Mammary epithelial cell (primary cell): ENCODE measurements at regions of chr15 and their contacts with region 1.

Region 1: GRCh38 chr15:44215594-44215993 is 20.5 kb upstream of the FRMD5 start:
- DNase-seq: peak; percentile 94
- H3K4me3 ChIP-seq: no peak overlapping the region
- H3K27ac ChIP-seq: no peak overlapping the region
- H3K4me1 ChIP-seq: peaks cover 17% of the 10 kb centered on the region
- H3K27me3 ChIP-seq: no peaks in the 10 kb centered on the region
- CTCF ChIP-seq: no peak

Region 2: GRCh38 chr15:43872416-43873020 is 343.1 kb before region 1 on chr15:
- CTCF ChIA-PET with region 1: no interaction called
- dilution Hi-C with region 1: no loop called
- in situ Hi-C with region 1: no loop called
- intact Hi-C with region 1: loop called (anchors 2 kb)
- DNase-seq: peak; percentile 27
- H3K4me3 ChIP-seq: no peak overlapping the region
- H3K27ac ChIP-seq: no peak overlapping the region
- H3K4me1 ChIP-seq: no peaks in the 10 kb centered on the region
- H3K27me3 ChIP-seq: no peaks in the 10 kb centered on the region
- CTCF ChIP-seq: peak; percentile 59 to 65

Region 3: GRCh38 chr15:43939070-43939469 is 276.5 kb before region 1 on chr15:
- CTCF ChIA-PET with region 1: no interaction called
- dilution Hi-C with region 1: no loop called
- in situ Hi-C with region 1: no loop called
- intact Hi-C with region 1: loop called (anchors 1 kb)
- DNase-seq: no peak
- H3K4me3 ChIP-seq: no peak overlapping the region
- H3K27ac ChIP-seq: no peak overlapping the region
- H3K4me1 ChIP-seq: peaks cover 5% of the 10 kb centered on the region
- H3K27me3 ChIP-seq: no peaks in the 10 kb centered on the region
- CTCF ChIP-seq: peak; percentile 52 to 71

Region 4: GRCh38 chr15:44075535-44075934 is 140.1 kb before region 1 on chr15:
- CTCF ChIA-PET with region 1: no interaction called
- dilution Hi-C with region 1: no loop called
- in situ Hi-C with region 1: no loop called
- intact Hi-C with region 1: loop called (anchors 2 kb)
- DNase-seq: peak; percentile 94
- H3K4me3 ChIP-seq: peak overlapping the region in 1 of 3 experiments; percentile 17
- H3K27ac ChIP-seq: peak overlapping the region; percentile 99
- H3K4me1 ChIP-seq: peaks cover 20% of the 10 kb centered on the region
- H3K27me3 ChIP-seq: no peaks in the 10 kb centered on the region
- CTCF ChIP-seq: no peak

Region 5: GRCh38 chr15:44137750-44138149 is 77.8 kb before region 1 on chr15:
- CTCF ChIA-PET with region 1: no interaction called
- dilution Hi-C with region 1: loop called (anchors 5 kb)
- in situ Hi-C with region 1: no loop called
- intact Hi-C with region 1: no loop called
- DNase-seq: peak; percentile 19
- H3K4me3 ChIP-seq: no peak overlapping the region
- H3K27ac ChIP-seq: no peak overlapping the region
- H3K4me1 ChIP-seq: peaks cover 10% of the 10 kb centered on the region
- H3K27me3 ChIP-seq: no peaks in the 10 kb centered on the region
- CTCF ChIP-seq: no peak

Region 6: DNA sequence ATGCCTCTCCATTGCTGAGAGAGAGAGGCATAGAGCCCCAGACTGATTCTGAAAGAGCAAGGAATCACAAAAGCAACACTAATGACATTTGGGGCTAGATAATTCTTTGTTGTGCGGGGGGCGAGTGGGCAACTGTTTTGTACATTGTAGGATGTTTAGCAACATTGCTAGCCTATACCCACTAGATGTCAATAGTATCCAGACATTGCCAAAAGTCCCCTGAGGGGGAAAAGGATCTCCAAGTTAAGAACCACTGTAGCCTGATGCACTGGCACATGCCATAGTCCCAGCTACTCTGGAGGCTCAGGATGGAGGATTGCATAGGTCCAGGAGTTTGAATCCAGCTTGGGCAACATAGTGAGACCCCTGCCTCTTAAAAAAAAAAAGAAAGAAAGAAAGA is 50.2 kb after region 1 on chr15:
- CTCF ChIA-PET with region 1: no interaction called
- dilution Hi-C with region 1: no loop called
- in situ Hi-C with region 1: no loop called
- intact Hi-C with region 1: no loop called
- DNase-seq: no peak
- H3K4me3 ChIP-seq: no peak overlapping the region
- H3K27ac ChIP-seq: no peak overlapping the region
- H3K4me1 ChIP-seq: no peaks in the 10 kb centered on the region
- H3K27me3 ChIP-seq: no peaks in the 10 kb centered on the region
- CTCF ChIP-seq: peak in 1 of 2 donors; percentile 12

Region 7: DNA sequence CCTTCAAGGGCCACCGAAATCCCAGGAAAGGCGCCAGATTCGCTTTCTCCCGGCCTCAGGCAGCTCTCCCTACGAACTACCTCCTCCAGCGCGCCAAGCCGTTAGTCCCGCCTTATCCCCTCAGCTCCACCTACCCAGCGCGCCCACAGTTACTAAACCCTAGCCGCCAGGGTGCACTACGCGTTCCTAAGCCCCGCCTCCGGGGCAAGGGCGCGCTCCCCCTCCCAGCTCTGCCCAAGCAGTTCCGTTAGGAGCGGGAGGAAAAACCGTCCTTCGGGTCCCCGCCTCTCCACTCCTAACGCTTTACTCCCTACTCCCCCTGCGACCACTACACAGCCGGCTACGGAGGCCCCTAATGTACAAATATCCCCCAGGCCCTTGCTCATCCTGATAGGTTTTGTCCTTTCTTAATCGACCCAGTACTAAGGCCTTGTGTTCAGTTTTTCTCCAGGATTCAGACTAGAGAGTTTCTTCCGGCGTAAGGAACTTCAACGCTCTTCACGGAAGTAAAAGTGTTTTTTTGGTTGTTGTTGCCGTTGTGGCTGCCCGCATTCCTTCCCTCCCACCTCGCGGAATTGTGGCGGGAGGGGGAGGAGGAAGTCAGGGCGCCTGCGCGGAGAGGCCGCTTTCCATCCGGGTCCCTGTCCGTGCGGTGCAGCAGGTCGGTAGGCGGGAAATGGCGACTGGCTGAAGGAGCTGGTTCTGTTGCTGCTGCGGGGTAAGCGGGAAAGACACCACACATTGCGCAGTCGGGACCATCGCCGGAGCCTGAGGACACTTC is 211.6 kb after region 1 on chr15 and contains the start of gene CTDSPL2:
- CTCF ChIA-PET with region 1: no interaction called
- dilution Hi-C with region 1: no loop called
- in situ Hi-C with region 1: no loop called
- intact Hi-C with region 1: loop called (anchors 5 kb)
- DNase-seq: peak; percentile 98
- H3K4me3 ChIP-seq: peak within 1 kb of the TSS; percentile 75 to 94 (median 88)
- H3K27ac ChIP-seq: peak within 1 kb of the TSS; percentile 98
- H3K4me1 ChIP-seq: no peaks in the 10 kb centered on the region
- H3K27me3 ChIP-seq: no peaks in the 10 kb centered on the region
- CTCF ChIP-seq: peak in 1 of 2 donors; percentile 44
- total RNA-seq, gene CTDSPL2: 38.0 to 47.3 TPM